ENCODE measurements at regions of chr6 and their contacts with region 1.

Region 1: DNA sequence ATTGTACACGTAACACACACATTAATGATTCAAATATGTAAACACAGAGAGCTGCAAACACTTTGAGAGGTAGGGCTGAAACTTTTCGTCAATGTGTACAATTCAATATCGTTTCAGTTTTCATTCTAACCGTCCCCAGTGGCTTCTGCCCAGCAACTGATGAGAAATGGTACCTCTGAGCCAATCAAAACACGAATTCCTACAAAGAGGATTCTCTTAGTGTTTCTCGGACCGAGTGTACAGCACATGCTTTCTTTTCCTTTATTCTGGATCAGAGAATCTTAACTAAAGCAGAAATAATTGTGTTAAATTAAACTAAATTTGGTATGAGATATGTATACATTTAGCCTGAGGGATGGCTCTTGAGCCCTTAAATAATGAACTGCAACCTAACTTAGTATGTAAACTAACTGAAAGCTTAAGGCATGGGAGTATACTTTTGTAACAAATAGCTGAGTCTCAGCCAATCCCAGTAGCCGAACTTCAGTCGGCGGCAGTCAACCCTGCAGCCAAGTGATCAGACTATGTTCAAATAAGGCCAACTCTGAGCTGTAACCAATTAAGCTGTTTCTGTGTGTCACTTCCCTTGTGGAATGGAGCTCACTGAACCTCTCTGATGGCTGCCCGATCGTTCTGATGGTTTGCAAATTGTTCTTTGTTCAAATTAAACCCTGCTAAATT is 16.1 kb downstream of the BTN2A1 start:
- DNase-seq: peak; percentile 37 to 94 (median 90)
- ATAC-seq: peak; percentile 96
- H3K4me3 ChIP-seq: peak overlapping the region; percentile 67
- H3K4me3 Mint-ChIP-seq: peak overlapping the region; percentile 88 to 100 (median 97)
- H3K27ac ChIP-seq: peak overlapping the region; percentile 91
- H3K27ac Mint-ChIP-seq: peak overlapping the region; percentile 98 to 100 (median 100)
- H3K4me1 ChIP-seq: peaks cover 33% of the 10 kb centered on the region in 2 donors
- H3K4me1 Mint-ChIP-seq: peaks cover 41 to 72% (median 64%) of the 10 kb centered on the region in 7 donors
- H3K27me3 ChIP-seq: no peaks in the 10 kb centered on the region
- H3K27me3 Mint-ChIP-seq: no peaks in the 10 kb centered on the region

Region 2: GRCh38 chr6:26103770-26104456 is 370.0 kb before region 1 on chr6:
- CTCF ChIA-PET with region 1: no interaction called
- POLR2A ChIA-PET with region 1: interaction called, 3 read pairs
- intact Hi-C with region 1: loop called in 1 of 2 experiments (anchors 10 kb)
- DNase-seq: peak; percentile 83 to 96 (median 95)
- ATAC-seq: peak; percentile 94
- H3K4me3 ChIP-seq: peak overlapping the region; percentile 40
- H3K4me3 Mint-ChIP-seq: peak overlapping the region; percentile 81 to 97 (median 89)
- H3K27ac ChIP-seq: peak overlapping the region; percentile 75
- H3K27ac Mint-ChIP-seq: peak overlapping the region; percentile 96 to 100 (median 98)
- H3K4me1 ChIP-seq: peaks cover 4 to 12% of the 10 kb centered on the region in 2 donors
- H3K4me1 Mint-ChIP-seq: peaks cover 7 to 25% (median 22%) of the 10 kb centered on the region in 7 donors
- H3K27me3 ChIP-seq: no peaks in the 10 kb centered on the region
- H3K27me3 Mint-ChIP-seq: peaks cover 0 to 3% (median 0%) of the 10 kb centered on the region in 5 donors

Region 3: DNA sequence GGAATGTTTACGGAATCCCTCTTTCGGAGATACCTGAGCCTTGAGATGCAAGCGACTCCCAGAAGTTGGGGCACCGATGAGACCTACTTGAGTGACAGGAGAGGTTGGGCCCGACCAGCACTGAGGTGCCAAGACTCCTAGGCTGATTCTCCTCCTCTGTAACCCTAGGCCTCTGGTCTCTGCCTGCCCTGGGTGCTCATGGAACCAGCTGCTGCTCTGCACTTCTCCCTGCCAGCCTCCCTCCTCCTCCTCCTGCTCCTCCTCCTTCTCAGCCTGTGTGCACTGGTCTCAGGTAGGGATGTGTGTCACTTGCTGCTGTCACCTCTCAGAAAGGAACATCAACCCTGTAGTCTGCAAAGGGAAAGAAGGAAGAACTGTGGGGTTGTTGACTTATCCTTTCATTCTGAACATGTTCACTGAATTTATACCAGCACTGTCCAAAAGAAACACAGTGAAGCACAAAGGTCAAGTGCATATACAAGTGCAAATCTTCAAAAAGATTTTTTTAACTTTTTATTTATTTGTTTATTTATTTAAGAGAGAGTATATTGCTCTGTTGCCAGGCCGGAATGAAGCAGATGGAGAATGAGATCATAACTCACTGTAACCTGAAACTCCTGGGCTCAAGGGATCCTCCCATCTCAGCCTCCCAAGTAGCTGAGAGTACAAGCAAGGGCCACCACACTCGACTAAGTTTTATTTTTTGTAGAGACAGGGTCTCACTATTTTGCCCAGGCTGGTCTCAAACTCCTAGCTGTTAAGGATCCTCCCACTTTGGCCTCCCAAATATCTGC is 90.1 kb before region 1 on chr6:
- CTCF ChIA-PET with region 1: no interaction called
- POLR2A ChIA-PET with region 1: interaction called, 3 read pairs
- intact Hi-C with region 1: loop called (anchors 1 kb)
- DNase-seq: peak in 1 of 9 donors; percentile 20
- ATAC-seq: peak; percentile 9
- H3K4me3 ChIP-seq: peak overlapping the region; percentile 83
- H3K4me3 Mint-ChIP-seq: peak overlapping the region; percentile 91 to 100 (median 98)
- H3K27ac ChIP-seq: peak overlapping the region; percentile 96
- H3K27ac Mint-ChIP-seq: peak overlapping the region; percentile 81 to 99 (median 95)
- H3K4me1 ChIP-seq: peaks cover 8 to 16% of the 10 kb centered on the region in 2 donors
- H3K4me1 Mint-ChIP-seq: peaks cover 17 to 57% (median 33%) of the 10 kb centered on the region in 7 donors
- H3K27me3 ChIP-seq: no peaks in the 10 kb centered on the region
- H3K27me3 Mint-ChIP-seq: no peaks in the 10 kb centered on the region

Region 4: DNA sequence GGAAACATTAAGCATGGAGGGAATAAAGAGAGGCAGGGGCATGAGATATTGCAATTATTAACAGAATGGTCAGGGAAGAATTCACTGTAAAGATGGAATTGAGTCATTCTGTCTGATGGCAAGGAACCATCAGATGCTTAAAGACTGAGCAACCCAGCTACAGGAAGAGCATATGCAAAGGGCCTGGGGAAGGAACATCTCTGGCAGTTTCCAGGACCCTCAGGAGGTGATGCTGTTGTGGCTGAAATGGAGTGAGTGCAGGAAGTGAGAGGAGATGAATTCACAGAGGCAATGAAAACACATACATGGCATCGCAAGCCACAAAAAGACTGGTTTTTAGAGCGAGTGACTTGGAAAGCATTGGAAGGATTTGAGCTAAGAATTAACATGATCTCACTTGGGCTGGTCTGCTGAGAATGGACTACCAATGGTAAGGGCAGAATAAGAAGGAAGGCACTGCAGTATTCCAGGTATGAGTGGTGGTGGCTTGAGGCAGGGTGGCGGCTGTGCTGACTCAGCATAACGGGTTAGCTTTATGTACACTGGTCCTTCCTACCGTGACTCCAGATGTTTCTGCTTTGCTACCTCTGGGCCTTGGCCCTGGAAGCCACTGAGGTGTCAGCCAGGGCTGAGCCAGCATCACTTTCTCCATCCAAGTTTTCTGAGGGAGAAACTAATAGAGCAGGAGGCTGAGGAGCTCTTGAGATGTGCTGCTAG is 46.6 kb before region 1 on chr6:
- CTCF ChIA-PET with region 1: no interaction called
- POLR2A ChIA-PET with region 1: no interaction called
- intact Hi-C with region 1: no loop called
- DNase-seq: no peak
- ATAC-seq: no peak
- H3K4me3 ChIP-seq: no peak overlapping the region
- H3K4me3 Mint-ChIP-seq: no peak overlapping the region
- H3K27ac ChIP-seq: no peak overlapping the region
- H3K27ac Mint-ChIP-seq: no peak overlapping the region
- H3K4me1 ChIP-seq: no peaks in the 10 kb centered on the region
- H3K4me1 Mint-ChIP-seq: peaks cover 0 to 16% (median 0%) of the 10 kb centered on the region in 7 donors
- H3K27me3 ChIP-seq: no peaks in the 10 kb centered on the region
- H3K27me3 Mint-ChIP-seq: no peaks in the 10 kb centered on the region

Region 5: GRCh38 chr6:26439657-26440056 is 34.2 kb before region 1 on chr6:
- CTCF ChIA-PET with region 1: no interaction called
- POLR2A ChIA-PET with region 1: interaction called, 19 read pairs
- intact Hi-C with region 1: loop called (anchors 1 kb)
- DNase-seq: peak in 3 of 9 donors; percentile 7 to 35 (median 15)
- ATAC-seq: no peak
- H3K4me3 ChIP-seq: peak overlapping the region; percentile 94
- H3K4me3 Mint-ChIP-seq: peak overlapping the region; percentile 89 to 100 (median 98)
- H3K27ac ChIP-seq: peak overlapping the region; percentile 99
- H3K27ac Mint-ChIP-seq: peak overlapping the region; percentile 95 to 100 (median 99)
- H3K4me1 ChIP-seq: peaks cover 16 to 19% of the 10 kb centered on the region in 2 donors
- H3K4me1 Mint-ChIP-seq: peaks cover 27 to 52% (median 41%) of the 10 kb centered on the region in 7 donors
- H3K27me3 ChIP-seq: no peaks in the 10 kb centered on the region
- H3K27me3 Mint-ChIP-seq: no peaks in the 10 kb centered on the region

Region 6: DNA sequence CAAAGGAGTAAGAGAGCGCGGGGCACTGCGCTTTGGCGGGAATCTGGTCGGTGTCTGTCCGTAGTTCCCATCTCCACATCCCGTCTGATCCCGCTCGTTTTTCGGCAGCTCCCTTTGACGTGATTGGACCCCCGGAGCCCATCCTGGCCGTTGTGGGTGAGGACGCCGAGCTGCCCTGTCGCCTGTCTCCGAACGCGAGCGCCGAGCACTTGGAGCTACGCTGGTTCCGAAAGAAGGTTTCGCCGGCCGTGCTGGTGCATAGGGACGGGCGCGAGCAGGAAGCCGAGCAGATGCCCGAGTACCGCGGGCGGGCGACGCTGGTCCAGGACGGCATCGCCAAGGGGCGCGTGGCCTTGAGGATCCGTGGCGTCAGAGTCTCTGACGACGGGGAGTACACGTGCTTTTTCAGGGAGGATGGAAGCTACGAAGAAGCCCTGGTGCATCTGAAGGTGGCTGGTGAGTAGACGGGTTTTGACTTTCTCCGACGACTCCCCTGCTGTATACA is 27.6 kb after region 1 on chr6:
- CTCF ChIA-PET with region 1: no interaction called
- POLR2A ChIA-PET with region 1: interaction called, 18 read pairs
- intact Hi-C with region 1: loop called in 1 of 2 experiments (anchors 2 kb)
- DNase-seq: peak in 8 of 9 donors; percentile 25 to 39 (median 33)
- ATAC-seq: peak; percentile 79
- H3K4me3 ChIP-seq: peak overlapping the region; percentile 51
- H3K4me3 Mint-ChIP-seq: peak overlapping the region; percentile 63 to 87 (median 84)
- H3K27ac ChIP-seq: no peak overlapping the region
- H3K27ac Mint-ChIP-seq: peak overlapping the region in 7 of 9 donors; percentile 5 to 41 (median 25)
- H3K4me1 ChIP-seq: peaks cover 10% of the 10 kb centered on the region in 2 donors
- H3K4me1 Mint-ChIP-seq: peaks cover 10 to 22% (median 17%) of the 10 kb centered on the region in 7 donors
- H3K27me3 ChIP-seq: peaks cover 13 to 15% of the 10 kb centered on the region in 2 donors
- H3K27me3 Mint-ChIP-seq: peaks cover 11 to 48% (median 27%) of the 10 kb centered on the region in 5 donors

Region 7: DNA sequence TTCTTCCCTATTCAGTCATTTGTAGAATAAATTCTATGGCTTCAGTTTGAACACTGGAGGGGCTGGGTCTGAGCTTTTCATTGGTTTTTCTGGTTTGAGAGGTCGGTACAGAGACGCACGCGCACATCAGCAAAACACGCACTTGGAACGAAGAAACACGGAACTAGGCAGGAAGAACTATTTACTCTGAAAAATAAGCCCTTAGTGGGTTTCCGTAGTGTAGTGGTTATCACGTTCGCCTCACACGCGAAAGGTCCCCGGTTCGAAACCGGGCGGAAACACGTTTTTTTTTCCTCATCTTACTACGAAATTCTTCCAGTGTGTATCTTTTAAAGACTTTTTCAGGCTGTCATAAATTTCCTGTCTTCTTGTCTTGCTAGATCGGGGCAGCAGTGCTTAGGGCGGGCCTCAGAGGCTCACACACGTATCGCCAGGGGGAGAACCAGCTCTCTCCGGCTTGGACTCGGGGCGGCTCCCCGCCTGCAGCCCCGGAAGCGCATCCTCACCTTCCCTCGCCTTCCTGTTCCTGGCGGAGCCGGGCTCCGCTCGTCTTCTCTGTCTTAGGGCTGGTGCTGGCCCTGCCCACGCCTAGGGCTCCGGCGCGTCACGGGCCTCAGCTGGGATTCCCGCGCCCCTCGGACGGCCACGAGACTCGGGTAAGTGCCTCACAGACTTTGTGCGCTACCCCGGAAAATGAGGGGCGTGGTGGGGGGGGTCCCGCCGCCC is 64.1 kb after region 1 on chr6 and contains the start of gene HMGN4:
- CTCF ChIA-PET with region 1: interaction called, 3 read pairs
- POLR2A ChIA-PET with region 1: interaction called, 51 read pairs
- intact Hi-C with region 1: loop called (anchors 1 kb)
- DNase-seq: peak; percentile 64 to 97 (median 95)
- ATAC-seq: peak; percentile 79
- H3K4me3 ChIP-seq: peak within 1 kb of the TSS; percentile 76
- H3K4me3 Mint-ChIP-seq: peak within 1 kb of the TSS; percentile 88 to 99 (median 94)
- H3K27ac ChIP-seq: peak within 1 kb of the TSS; percentile 88
- H3K27ac Mint-ChIP-seq: peak within 1 kb of the TSS; percentile 91 to 99 (median 98)
- H3K4me1 ChIP-seq: peaks cover 20 to 23% of the 10 kb centered on the region in 2 donors
- H3K4me1 Mint-ChIP-seq: peaks cover 46 to 72% (median 60%) of the 10 kb centered on the region in 7 donors
- H3K27me3 ChIP-seq: no peaks in the 10 kb centered on the region
- H3K27me3 Mint-ChIP-seq: peaks cover 0 to 5% (median 0%) of the 10 kb centered on the region in 5 donors
- total RNA-seq, gene HMGN4: 37.6 to 96.0 (median 81.7) TPM

Region 8: GRCh38 chr6:26596579-26597388 is 122.9 kb after region 1 on chr6 and contains the start of gene ABT1:
- CTCF ChIA-PET with region 1: interaction called, 4 read pairs
- POLR2A ChIA-PET with region 1: no interaction called
- intact Hi-C with region 1: loop called in 1 of 2 experiments (anchors 1 kb)
- DNase-seq: peak; percentile 87 to 96 (median 95)
- ATAC-seq: peak; percentile 95
- H3K4me3 ChIP-seq: peak within 1 kb of the TSS; percentile 81
- H3K4me3 Mint-ChIP-seq: no peak within 1 kb of the TSS
- H3K27ac ChIP-seq: peak within 1 kb of the TSS; percentile 89
- H3K27ac Mint-ChIP-seq: peak within 1 kb of the TSS in 1 of 9 donors; percentile 92
- H3K4me1 ChIP-seq: peaks cover 17 to 22% of the 10 kb centered on the region in 2 donors
- H3K4me1 Mint-ChIP-seq: peaks cover 5 to 20% (median 10%) of the 10 kb centered on the region in 7 donors
- H3K27me3 ChIP-seq: peaks cover 8 to 14% of the 10 kb centered on the region in 2 donors
- H3K27me3 Mint-ChIP-seq: peaks cover 3 to 28% (median 16%) of the 10 kb centered on the region in 5 donors
- total RNA-seq, gene ABT1: 23.3 to 37.5 (median 35.0) TPM